IMR-90 (cell line): ENCODE measurements at regions of chr6 and their contacts with region 1.

Region 1: DNA sequence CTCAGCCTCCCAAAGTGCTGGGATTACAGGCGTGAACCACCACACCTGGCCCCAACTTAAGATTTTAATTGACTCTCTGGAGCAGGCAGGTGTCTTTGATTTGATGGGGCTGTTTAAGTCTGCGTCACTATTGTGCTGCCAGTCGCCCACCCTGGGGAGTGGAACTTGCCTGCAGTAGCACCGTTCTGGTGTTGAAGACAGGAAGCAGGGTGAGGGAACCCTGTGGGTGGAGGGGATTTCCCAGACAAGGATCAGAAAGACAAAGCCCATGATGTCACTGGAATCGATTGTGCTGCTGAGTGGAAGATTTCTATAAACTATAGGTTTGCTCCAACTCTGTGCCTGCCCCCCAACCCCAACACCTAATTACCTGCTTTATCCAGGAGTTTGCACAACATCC is 11.0 kb downstream of the ALDH8A1 start:
- DNase-seq: peak; percentile 72
- ATAC-seq: no peak
- H3K4me3 ChIP-seq: no peak overlapping the region
- H3K27ac ChIP-seq: no peak overlapping the region
- H3K4me1 ChIP-seq: peaks cover 18% of the 10 kb centered on the region
- H3K27me3 ChIP-seq: no peaks in the 10 kb centered on the region
- CTCF ChIP-seq: no peak
- POLR2A ChIP-seq: no peak
- RAD21 ChIP-seq: no peak

Region 2: DNA sequence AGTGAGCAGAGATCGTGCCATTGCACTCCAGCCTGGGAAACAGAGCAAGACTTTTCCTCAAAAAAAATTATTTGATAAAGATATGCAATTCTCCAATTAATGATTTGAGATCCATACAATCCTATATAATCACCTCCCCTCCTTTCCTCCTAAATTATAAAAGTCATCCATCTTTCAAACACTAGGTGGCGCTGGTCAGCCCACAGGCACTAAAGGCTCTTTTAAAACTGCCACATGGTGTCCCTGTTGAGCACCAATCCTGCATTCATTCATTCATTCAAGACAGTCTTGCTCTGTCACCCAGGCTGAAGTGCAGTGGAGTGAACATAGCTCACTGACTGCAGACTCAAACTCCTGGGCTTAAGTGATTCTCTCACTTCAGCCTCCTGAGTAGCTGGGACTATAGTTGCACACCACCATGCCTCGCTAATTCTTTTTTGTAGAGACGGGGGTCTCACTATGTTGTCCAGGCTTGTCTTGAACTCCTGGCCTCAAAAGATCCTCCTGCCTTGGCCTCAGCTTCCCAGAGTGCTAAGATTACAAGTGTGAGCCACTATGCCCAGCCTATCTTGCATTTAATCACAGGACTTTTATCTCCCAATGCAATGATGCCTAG is 827.7 kb before region 1 on chr6:
- CTCF ChIA-PET with region 1: interaction called, 3 read pairs
- POLR2A ChIA-PET with region 1: no interaction called
- dilution Hi-C with region 1: no loop called
- in situ Hi-C with region 1: no loop called
- intact Hi-C with region 1: loop called (anchors 1 kb)
- DNase-seq: peak; percentile 68
- ATAC-seq: peak; percentile 13; the same call in 1 of the 2 replicates
- H3K4me3 ChIP-seq: no peak overlapping the region
- H3K27ac ChIP-seq: no peak overlapping the region
- H3K4me1 ChIP-seq: peaks cover 3% of the 10 kb centered on the region
- H3K27me3 ChIP-seq: no peaks in the 10 kb centered on the region
- CTCF ChIP-seq: peak; percentile 99
- POLR2A ChIP-seq: no peak
- RAD21 ChIP-seq: peak; percentile 62

Region 3: DNA sequence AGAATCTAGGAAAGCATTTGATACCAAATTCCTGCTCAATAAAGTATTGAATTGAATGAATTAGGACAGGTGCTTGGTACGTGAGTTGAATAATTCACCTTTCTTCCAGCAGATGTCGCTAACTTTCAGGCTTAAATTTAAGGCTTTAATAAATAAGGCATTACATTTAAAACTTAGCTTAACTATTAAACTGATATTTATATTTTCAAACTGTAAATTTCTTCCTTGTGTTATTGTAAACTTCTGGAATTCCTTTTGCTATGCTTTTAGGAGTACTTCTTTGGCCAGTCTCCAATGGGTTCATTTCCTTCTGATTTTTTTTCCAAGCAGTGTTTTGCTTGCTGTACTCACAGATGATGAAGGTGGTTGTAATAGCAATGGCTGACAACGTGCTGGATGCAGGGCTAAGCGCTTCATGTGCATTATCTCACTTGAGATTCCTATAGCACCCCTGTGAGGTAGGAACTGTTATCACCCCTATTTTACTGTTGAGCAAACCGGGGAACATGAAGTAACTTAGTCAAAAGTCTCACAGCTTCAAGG is 815.2 kb before region 1 on chr6:
- CTCF ChIA-PET with region 1: interaction called, 8 read pairs
- POLR2A ChIA-PET with region 1: no interaction called
- dilution Hi-C with region 1: no loop called
- in situ Hi-C with region 1: no loop called
- intact Hi-C with region 1: loop called (anchors 2 kb)
- DNase-seq: peak; percentile 72
- ATAC-seq: peak; percentile 77
- H3K4me3 ChIP-seq: no peak overlapping the region
- H3K27ac ChIP-seq: no peak overlapping the region
- H3K4me1 ChIP-seq: no peaks in the 10 kb centered on the region; the same call in 1 of the 2 replicates
- H3K27me3 ChIP-seq: no peaks in the 10 kb centered on the region
- CTCF ChIP-seq: peak; percentile 64
- POLR2A ChIP-seq: no peak
- RAD21 ChIP-seq: peak; percentile 62

Region 4: GRCh38 chr6:134161036-134161435 is 777.9 kb before region 1 on chr6:
- CTCF ChIA-PET with region 1: interaction called, 13 read pairs
- POLR2A ChIA-PET with region 1: no interaction called
- dilution Hi-C with region 1: no loop called
- in situ Hi-C with region 1: loop called (anchors 5 kb)
- intact Hi-C with region 1: loop called (anchors 1 kb)
- DNase-seq: peak; percentile 45
- ATAC-seq: no peak
- H3K4me3 ChIP-seq: no peak overlapping the region
- H3K27ac ChIP-seq: no peak overlapping the region
- H3K4me1 ChIP-seq: no peaks in the 10 kb centered on the region; the same call in 1 of the 2 replicates
- H3K27me3 ChIP-seq: no peaks in the 10 kb centered on the region
- CTCF ChIP-seq: no peak
- POLR2A ChIP-seq: no peak
- RAD21 ChIP-seq: no peak

Region 5: GRCh38 chr6:134882426-134883038 is 56.4 kb before region 1 on chr6:
- CTCF ChIA-PET with region 1: interaction called, 5 read pairs
- POLR2A ChIA-PET with region 1: no interaction called
- dilution Hi-C with region 1: no loop called
- in situ Hi-C with region 1: no loop called
- intact Hi-C with region 1: loop called (anchors 2 kb)
- DNase-seq: peak; percentile 79
- ATAC-seq: peak; percentile 89
- H3K4me3 ChIP-seq: no peak overlapping the region
- H3K27ac ChIP-seq: peak overlapping the region; percentile 44; the same call in 1 of the 2 replicates
- H3K4me1 ChIP-seq: peaks cover 6% of the 10 kb centered on the region
- H3K27me3 ChIP-seq: no peaks in the 10 kb centered on the region
- CTCF ChIP-seq: peak; percentile 91
- POLR2A ChIP-seq: no peak
- RAD21 ChIP-seq: peak; percentile 95